ENCODE measurements at regions of chr2 and their contacts with region 1.

Region 1: DNA sequence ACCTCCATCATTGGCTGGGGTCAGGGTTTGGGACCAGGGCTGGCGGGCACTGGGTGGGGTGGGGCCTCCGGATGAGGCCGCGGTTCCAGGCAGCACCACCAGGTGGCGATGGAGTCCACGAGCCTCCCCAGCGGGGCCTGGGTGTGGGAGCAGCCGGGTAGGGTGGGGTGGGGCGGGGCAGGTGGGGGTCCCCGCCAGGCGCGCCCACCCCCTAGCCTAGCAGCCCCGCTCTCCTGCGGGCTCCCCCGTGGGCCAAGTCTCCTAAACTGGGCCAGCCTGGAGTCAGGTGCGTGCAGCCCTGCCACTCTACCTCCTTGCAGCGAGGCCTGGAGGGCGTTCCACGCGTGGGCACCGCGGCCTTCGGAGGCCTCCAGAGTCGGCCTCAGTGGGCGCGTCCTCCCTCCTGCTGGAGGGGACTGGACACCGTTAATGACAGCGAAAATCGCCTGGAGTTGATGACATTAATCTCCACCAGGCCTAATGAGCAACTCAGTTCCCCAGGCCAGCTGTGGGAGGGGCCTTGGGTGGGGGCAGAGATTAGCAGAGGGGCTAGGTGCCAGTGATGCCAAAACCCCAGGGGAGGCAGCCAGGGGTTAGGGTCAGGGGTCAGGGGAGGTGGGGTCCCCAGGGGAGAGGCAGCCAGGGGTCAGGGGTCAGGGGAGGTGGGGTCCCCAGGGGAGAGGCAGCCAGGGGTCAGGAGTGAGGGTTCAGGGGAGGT is 187.6 kb downstream of the TWIST2 start:
- DNase-seq: no peak
- ATAC-seq: peak; percentile 80
- H3K4me3 ChIP-seq: peak overlapping the region in 1 of 3 experiments; percentile 15; a peak in 1 of 6 replicates
- H3K27ac ChIP-seq: no peak overlapping the region
- H3K4me1 ChIP-seq: peaks cover 13% of the 10 kb centered on the region
- H3K27me3 ChIP-seq: peaks cover 3 to 52% of the 10 kb centered on the region in 2 experiments
- CTCF ChIP-seq: peak; percentile 87
- EP300 ChIP-seq: no peak
- POLR2A ChIP-seq: no peak
- RAD21 ChIP-seq: peak; percentile 55

Region 2: DNA sequence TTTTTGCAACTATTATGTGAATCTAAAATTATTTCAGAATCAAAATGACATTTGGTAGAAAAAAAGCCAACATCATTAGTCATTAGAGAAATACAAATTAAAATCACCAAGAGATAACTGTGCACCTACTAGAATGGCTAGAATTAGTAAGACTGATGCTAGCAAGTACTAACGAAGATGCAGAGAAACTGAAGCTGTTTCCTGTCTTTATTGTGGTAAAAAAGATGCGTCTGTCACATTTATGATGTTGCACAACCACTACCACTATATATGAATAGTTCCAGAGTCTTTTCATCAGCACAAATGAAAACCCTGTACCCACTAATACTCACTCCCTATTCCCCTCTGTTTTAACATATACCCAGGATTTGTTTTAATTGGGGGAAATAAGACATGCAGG is 204.3 kb before region 1 on chr2:
- CTCF ChIA-PET with region 1: no interaction called
- POLR2A ChIA-PET with region 1: no interaction called
- in situ Hi-C with region 1: no loop called
- intact Hi-C with region 1: no loop called
- DNase-seq: no peak
- ATAC-seq: no peak
- H3K4me3 ChIP-seq: no peak overlapping the region
- H3K27ac ChIP-seq: no peak overlapping the region
- H3K4me1 ChIP-seq: no peaks in the 10 kb centered on the region
- H3K27me3 ChIP-seq: peaks cover 0 to 33% of the 10 kb centered on the region in 2 experiments; a peak in 3 of 5 replicates
- CTCF ChIP-seq: no peak
- EP300 ChIP-seq: no peak
- POLR2A ChIP-seq: no peak
- RAD21 ChIP-seq: no peak

Region 3: GRCh38 chr2:238924796-238925195 is 110.7 kb before region 1 on chr2:
- CTCF ChIA-PET with region 1: no interaction called
- POLR2A ChIA-PET with region 1: no interaction called
- in situ Hi-C with region 1: no loop called
- intact Hi-C with region 1: no loop called
- DNase-seq: no peak
- ATAC-seq: no peak
- H3K4me3 ChIP-seq: no peak overlapping the region
- H3K27ac ChIP-seq: no peak overlapping the region
- H3K4me1 ChIP-seq: no peaks in the 10 kb centered on the region
- H3K27me3 ChIP-seq: peaks cover 28 to 94% of the 10 kb centered on the region in 2 experiments; a peak in 4 of 5 replicates
- CTCF ChIP-seq: no peak
- EP300 ChIP-seq: no peak
- POLR2A ChIP-seq: no peak
- RAD21 ChIP-seq: no peak

Region 4: DNA sequence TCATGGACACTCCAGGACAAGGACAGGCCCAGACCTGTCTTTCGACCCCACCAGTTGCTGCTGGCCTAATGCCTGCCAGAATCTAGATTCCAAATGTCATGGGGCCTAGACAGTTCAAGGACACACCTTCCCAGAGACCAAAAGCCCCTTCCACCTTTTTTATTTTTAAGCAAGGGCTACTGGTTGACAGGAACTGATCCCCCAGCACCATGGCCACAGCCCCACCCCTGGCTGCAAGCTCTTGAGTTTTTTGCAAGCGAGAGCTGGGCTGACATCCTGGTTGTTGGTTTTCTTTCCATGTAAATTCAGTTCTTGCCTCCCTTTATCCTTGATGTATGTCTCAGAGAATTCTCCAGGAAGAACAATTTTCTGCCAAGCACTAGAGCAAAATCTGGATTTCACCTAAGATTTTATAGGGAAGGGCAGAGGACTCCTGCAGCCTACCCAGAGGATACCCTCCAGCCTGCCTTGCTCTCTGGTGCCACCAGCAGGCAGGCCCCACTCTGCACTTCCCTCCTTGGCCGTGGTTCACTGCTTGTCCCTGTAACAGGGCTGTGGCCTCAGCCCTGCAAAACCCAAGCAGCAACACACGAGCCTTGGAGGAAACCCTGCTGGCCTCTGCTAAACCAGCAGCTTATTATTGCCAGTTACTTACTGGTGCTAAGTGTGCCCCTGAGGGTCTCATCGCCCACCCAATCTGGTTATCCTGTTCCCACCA is 89.9 kb before region 1 on chr2:
- CTCF ChIA-PET with region 1: no interaction called
- POLR2A ChIA-PET with region 1: no interaction called
- in situ Hi-C with region 1: no loop called
- intact Hi-C with region 1: no loop called
- DNase-seq: peak; percentile 29
- ATAC-seq: peak; percentile 95
- H3K4me3 ChIP-seq: no peak overlapping the region
- H3K27ac ChIP-seq: no peak overlapping the region
- H3K4me1 ChIP-seq: no peaks in the 10 kb centered on the region
- H3K27me3 ChIP-seq: peaks cover 15 to 66% of the 10 kb centered on the region in 2 experiments
- CTCF ChIP-seq: peak; percentile 81
- EP300 ChIP-seq: no peak
- POLR2A ChIP-seq: no peak
- RAD21 ChIP-seq: peak; percentile 61

Region 5: DNA sequence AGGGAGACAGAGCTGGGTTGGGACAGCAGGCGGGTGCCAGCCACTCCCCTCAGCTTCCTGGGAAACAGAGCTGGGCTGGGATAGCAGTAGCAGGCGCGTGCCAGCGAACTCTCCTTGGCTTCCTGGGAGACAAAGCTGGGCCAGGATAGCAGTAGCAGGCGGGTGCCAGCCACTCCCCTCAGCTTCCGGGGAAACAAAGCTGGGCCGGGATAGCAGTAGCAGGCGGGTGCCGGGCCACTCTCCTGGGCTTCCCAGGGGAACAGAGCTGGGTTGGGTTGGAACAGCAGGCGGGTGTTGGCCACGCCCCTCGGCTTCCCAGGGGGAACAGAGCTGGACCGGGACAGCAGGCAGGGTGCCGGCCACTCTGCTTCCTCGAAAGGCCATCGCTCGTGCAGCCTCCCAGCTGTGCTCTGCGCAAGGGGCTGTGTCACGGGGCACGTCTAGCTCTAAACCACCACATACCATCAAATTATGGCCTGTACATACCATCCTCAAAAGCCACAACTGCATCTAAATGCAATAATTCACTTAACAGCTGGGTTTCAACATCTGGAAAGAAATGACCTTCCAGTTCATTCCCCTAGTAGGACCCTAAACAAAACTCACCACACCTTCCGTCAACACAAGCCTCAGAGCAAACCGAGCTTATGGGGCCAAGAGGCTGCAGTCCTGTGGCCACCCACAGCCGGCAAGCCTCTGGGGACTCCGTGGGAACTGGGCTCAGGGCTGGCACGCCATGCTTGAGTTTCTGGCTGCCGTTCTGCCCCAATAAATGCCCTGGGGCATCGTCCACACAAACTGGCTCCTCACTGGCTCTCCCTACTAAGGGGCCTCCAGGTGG is 40.6 kb after region 1 on chr2:
- CTCF ChIA-PET with region 1: no interaction called
- POLR2A ChIA-PET with region 1: no interaction called
- in situ Hi-C with region 1: no loop called
- intact Hi-C with region 1: no loop called
- DNase-seq: no peak
- ATAC-seq: no peak
- H3K4me3 ChIP-seq: no peak overlapping the region
- H3K27ac ChIP-seq: no peak overlapping the region
- H3K4me1 ChIP-seq: no peaks in the 10 kb centered on the region
- H3K27me3 ChIP-seq: no peaks in the 10 kb centered on the region
- CTCF ChIP-seq: no peak
- EP300 ChIP-seq: no peak
- POLR2A ChIP-seq: no peak
- RAD21 ChIP-seq: no peak

Region 6: DNA sequence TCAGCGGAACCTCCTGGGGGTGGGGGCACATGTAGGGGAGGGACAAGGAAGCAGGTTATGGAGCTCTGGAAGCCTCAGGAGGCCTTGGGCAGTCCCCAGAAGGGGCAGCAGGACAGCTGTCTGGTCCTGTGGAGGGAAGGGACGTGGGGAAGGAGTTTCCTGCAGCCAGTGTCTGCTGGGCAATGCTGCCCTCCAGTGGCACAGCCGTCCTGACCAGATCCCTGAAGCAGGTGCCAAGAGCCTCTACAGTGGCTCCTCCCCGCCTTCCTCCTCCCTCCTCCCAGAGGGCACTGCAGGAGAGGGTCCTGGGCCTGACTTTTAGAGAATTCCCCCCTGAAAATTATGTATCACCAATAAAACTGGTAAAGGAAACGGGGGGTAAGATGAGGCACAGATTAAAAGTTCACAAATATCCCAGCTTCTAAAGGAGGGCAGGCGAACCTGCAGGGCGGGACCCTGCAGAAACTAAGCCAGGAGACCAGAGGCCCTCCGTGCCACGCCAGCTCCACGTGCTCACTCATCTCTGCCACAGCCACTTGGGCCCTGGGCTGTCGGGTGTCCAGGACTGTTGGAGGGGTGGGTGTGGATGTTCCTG is 70.9 kb after region 1 on chr2:
- CTCF ChIA-PET with region 1: interaction called, 15 read pairs
- POLR2A ChIA-PET with region 1: no interaction called
- in situ Hi-C with region 1: loop called (anchors 5 kb)
- intact Hi-C with region 1: loop called (anchors 1 kb)
- DNase-seq: peak; percentile 43
- ATAC-seq: peak; percentile 75
- H3K4me3 ChIP-seq: no peak overlapping the region
- H3K27ac ChIP-seq: no peak overlapping the region
- H3K4me1 ChIP-seq: no peaks in the 10 kb centered on the region
- H3K27me3 ChIP-seq: no peaks in the 10 kb centered on the region
- CTCF ChIP-seq: peak; percentile 85
- EP300 ChIP-seq: no peak
- POLR2A ChIP-seq: no peak
- RAD21 ChIP-seq: peak; percentile 85

Region 7: DNA sequence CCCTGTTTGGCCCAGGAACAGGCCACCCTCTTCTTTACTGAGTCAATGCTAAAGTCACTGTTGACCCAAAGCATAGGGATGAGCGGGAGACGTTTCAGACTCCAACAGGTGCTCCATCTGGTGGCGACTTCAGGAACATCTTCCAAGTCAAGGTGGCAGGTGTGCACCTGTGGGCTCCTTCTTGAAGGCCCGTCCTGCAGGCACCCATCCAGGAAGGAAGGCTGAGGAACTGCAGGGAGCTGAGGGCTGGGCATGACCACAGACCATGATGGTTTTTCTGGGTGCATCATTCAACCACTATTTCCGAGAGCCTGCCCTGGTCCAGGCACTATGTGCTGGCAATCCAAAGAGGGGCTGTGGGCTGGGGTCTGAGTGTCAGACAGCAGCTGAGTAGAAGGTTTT is 846.8 kb after region 1 on chr2:
- CTCF ChIA-PET with region 1: no interaction called
- POLR2A ChIA-PET with region 1: no interaction called
- in situ Hi-C with region 1: no loop called
- intact Hi-C with region 1: loop called (anchors 10 kb)
- DNase-seq: peak; percentile 55
- ATAC-seq: peak; percentile 92
- H3K4me3 ChIP-seq: no peak overlapping the region
- H3K27ac ChIP-seq: no peak overlapping the region
- H3K4me1 ChIP-seq: no peaks in the 10 kb centered on the region
- H3K27me3 ChIP-seq: peaks cover 3 to 17% of the 10 kb centered on the region in 2 experiments; a peak in 3 of 5 replicates
- CTCF ChIP-seq: peak; percentile 88
- EP300 ChIP-seq: no peak
- POLR2A ChIP-seq: no peak
- RAD21 ChIP-seq: peak; percentile 61